ENCODE measurements at regions of chr7 and their contacts with region 1.

Region 1: GRCh38 chr7:150420987-150421674 is 29.3 kb upstream of the GIMAP8 start:
- DNase-seq: peak; percentile 89
- H3K4me3 ChIP-seq: peak overlapping the region in 1 of 4 donors; percentile 16
- H3K27ac ChIP-seq: no peak overlapping the region
- H3K4me1 ChIP-seq: peaks cover 0 to 4% (median 0%) of the 10 kb centered on the region in 4 donors
- H3K27me3 ChIP-seq: no peaks in the 10 kb centered on the region
- CTCF ChIP-seq: peak; percentile 85 to 89 (median 87)
- EP300 ChIP-seq: no peak
- POLR2A ChIP-seq: no peak

Region 2: DNA sequence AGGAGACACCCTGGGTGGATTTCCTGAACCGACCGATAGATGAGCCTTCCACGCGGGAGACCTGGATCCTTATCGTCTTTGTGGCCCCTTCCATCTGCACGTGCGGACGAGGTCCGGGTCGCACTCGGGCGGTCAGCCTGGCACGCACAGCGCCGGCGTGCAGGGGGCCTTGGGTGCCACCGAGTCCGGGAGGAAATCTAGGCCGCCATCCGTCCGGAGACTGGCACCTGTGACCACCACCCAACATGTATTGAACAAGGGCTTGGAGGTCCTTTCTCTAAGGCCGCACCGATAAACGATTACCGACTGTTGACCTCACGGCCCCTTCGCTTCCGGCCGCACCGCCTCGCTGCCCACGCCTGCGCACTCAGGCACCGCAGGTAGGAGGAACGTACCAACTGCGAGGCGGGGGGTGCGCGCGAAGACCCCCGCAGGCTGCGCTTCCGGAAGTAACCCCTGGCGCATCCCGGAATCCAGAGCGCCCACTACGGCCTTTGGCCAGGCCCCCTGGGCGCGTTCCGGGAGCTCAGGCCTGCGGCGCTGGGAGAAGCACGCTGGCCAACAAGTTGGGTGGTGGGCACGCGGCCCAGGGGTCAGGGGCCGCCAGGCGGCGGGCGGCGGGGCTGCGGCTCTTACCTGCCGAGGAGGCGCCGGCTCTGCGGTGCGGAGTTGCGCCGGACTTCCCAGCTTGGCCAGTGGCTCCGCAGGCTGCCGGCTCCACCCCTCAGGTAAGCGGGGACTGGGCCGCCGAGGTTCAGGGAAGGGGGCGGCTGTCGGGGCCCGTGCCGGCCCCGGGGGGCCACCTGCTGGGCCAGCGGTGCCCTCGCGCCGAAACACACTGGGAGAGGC is 98.1 kb before region 1 on chr7 and contains the starts of genes ACTR3C and LRRC61:
- in situ Hi-C with region 1: loop called in 3 of 4 experiments (anchors 25 kb)
- intact Hi-C with region 1: no loop called
- DNase-seq: peak; percentile 77
- H3K4me3 ChIP-seq: peak within 1 kb of the TSS; percentile 60 to 87 (median 75)
- H3K27ac ChIP-seq: peak within 1 kb of the TSS; percentile 89 to 96 (median 96)
- H3K4me1 ChIP-seq: peaks cover 7 to 23% (median 22%) of the 10 kb centered on the region in 4 donors
- H3K27me3 ChIP-seq: no peaks in the 10 kb centered on the region
- CTCF ChIP-seq: peak in 4 of 5 experiments; percentile 24 to 54 (median 30)
- EP300 ChIP-seq: no peak
- POLR2A ChIP-seq: peak; percentile 43
- total RNA-seq, gene ACTR3C: 19.9 to 71.1 (median 42.7) TPM
- total RNA-seq, gene LRRC61: 1.4 to 55.4 (median 17.2) TPM